ENCODE measurements at regions of chr5 and their contacts with region 1.

Region 1: GRCh38 chr5:173972925-173973615 is 15.9 kb upstream of the C5orf47 start:
- DNase-seq: peak in 1 of 2 donors; percentile 92
- H3K4me3 ChIP-seq: peak overlapping the region; percentile 65 to 68
- H3K27ac ChIP-seq: no peak overlapping the region
- H3K4me1 ChIP-seq: peaks cover 4 to 10% of the 10 kb centered on the region in 2 donors
- H3K27me3 ChIP-seq: no peaks in the 10 kb centered on the region
- CTCF ChIP-seq: peak; percentile 86 to 90 (median 90)

Region 2: GRCh38 chr5:173764321-173765029 is 208.6 kb before region 1 on chr5:
- intact Hi-C with region 1: loop called (anchors 5 kb)
- DNase-seq: peak; percentile 70 to 90
- H3K4me3 ChIP-seq: no peak overlapping the region
- H3K27ac ChIP-seq: peak overlapping the region; percentile 27 to 64
- H3K4me1 ChIP-seq: peaks cover 0 to 5% of the 10 kb centered on the region in 2 donors
- H3K27me3 ChIP-seq: no peaks in the 10 kb centered on the region
- CTCF ChIP-seq: no peak

Region 3: GRCh38 chr5:173917788-173918786 is 55.0 kb before region 1 on chr5:
- intact Hi-C with region 1: loop called (anchors 5 kb)
- DNase-seq: no peak
- H3K4me3 ChIP-seq: peak overlapping the region; percentile 61 to 68
- H3K27ac ChIP-seq: peak overlapping the region; percentile 87 to 90
- H3K4me1 ChIP-seq: peaks cover 0 to 52% of the 10 kb centered on the region in 2 donors
- H3K27me3 ChIP-seq: no peaks in the 10 kb centered on the region
- CTCF ChIP-seq: no peak

Region 4: GRCh38 chr5:174311531-174312269 is 338.6 kb after region 1 on chr5:
- intact Hi-C with region 1: loop called (anchors 5 kb)
- DNase-seq: peak in 1 of 2 donors; percentile 69
- H3K4me3 ChIP-seq: peak overlapping the region; percentile 65 to 70
- H3K27ac ChIP-seq: no peak overlapping the region
- H3K4me1 ChIP-seq: peaks cover 0 to 4% of the 10 kb centered on the region in 2 donors
- H3K27me3 ChIP-seq: no peaks in the 10 kb centered on the region
- CTCF ChIP-seq: peak; percentile 63 to 77 (median 71)

Measured in ascending aorta (tissue), 2 donors.